ENCODE measurements at regions of chr9 and their contacts with region 1.

Region 1: DNA sequence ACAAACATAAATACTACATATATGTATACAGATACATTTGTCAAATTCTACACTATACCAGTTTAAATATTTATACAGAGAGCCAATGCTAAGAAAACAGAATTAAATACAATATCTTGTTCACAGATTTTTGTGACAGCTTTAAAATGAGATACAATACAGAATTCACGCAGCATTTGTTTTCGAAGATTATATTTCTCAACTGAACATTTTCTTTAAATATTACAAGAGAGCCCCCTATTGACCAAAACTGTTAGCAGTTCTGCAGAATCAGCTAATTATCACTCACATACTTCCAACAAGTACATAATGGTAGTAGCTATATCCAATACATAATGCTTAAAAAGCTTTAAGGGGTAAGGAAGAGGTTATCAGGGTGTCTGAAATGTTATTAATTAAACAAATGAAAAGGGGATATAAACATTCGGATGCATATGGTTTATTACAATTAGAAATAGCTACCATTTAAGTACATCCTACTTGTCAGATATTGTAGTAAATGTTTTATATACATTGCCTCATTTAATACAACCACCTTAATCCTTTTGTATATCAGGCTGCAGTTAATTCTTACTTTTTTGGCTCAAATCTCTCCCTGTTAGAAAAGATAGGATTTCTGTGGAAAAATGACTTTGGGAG is 31.7 kb downstream of the ZDHHC21 start:
- DNase-seq: peak; percentile 58
- H3K4me3 ChIP-seq: no peak overlapping the region
- H3K27ac ChIP-seq: no peak overlapping the region
- H3K4me1 ChIP-seq: no peaks in the 10 kb centered on the region; a peak in 1 of 4 replicates
- H3K27me3 ChIP-seq: no peaks in the 10 kb centered on the region
- CTCF ChIP-seq: peak; percentile 71
- EP300 ChIP-seq: no peak
- RAD21 ChIP-seq: peak; percentile 78

Region 2: DNA sequence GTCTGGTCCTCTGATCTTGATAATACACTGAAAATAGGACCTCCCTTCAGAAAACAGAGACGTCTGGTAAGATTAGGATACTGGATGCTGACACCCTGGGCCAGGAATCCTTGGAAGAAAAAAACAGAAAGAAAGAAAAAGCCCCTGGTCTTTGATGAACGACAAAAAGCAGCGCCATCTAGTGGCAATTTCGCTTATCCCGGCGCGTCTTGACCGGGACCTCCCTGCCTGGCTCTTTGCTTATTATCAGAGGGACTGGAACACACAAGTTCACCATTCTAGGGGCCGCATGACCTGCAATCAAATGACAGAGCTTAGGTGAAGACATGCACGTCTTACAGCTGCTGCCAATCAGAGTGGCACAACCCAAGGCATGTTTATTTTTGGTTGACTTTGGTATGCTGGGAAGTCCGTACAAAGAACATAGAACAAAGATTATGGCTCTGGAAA is 232.7 kb before region 1 on chr9:
- CTCF ChIA-PET with region 1: interaction called, 14 read pairs
- POLR2A ChIA-PET with region 1: no interaction called
- DNase-seq: peak; percentile 53
- H3K4me3 ChIP-seq: no peak overlapping the region; a peak in 1 of 4 replicates
- H3K27ac ChIP-seq: peak overlapping the region in 1 of 2 experiments; percentile 18; a peak in 1 of 4 replicates
- H3K4me1 ChIP-seq: peaks cover 7 to 15% of the 10 kb centered on the region in 2 experiments; a peak in 3 of 4 replicates
- H3K27me3 ChIP-seq: no peaks in the 10 kb centered on the region
- CTCF ChIP-seq: peak; percentile 91
- EP300 ChIP-seq: no peak
- RAD21 ChIP-seq: peak; percentile 76

Region 3: GRCh38 chr9:14441976-14442651 is 219.4 kb before region 1 on chr9:
- CTCF ChIA-PET with region 1: interaction called, 25 read pairs
- POLR2A ChIA-PET with region 1: no interaction called
- DNase-seq: no peak
- H3K4me3 ChIP-seq: no peak overlapping the region
- H3K27ac ChIP-seq: no peak overlapping the region
- H3K4me1 ChIP-seq: peaks cover 8 to 28% of the 10 kb centered on the region in 2 experiments; a peak in 2 of 4 replicates
- H3K27me3 ChIP-seq: no peaks in the 10 kb centered on the region
- CTCF ChIP-seq: peak; percentile 47
- EP300 ChIP-seq: no peak
- RAD21 ChIP-seq: 0 out of 2 replicates have a peak, but pooled peaks have one; percentile 9

Region 4: GRCh38 chr9:14466429-14466818 is 195.1 kb before region 1 on chr9:
- CTCF ChIA-PET with region 1: interaction called, 25 read pairs
- POLR2A ChIA-PET with region 1: no interaction called
- DNase-seq: no peak
- H3K4me3 ChIP-seq: no peak overlapping the region
- H3K27ac ChIP-seq: no peak overlapping the region
- H3K4me1 ChIP-seq: peaks cover 0 to 4% of the 10 kb centered on the region in 2 experiments; a peak in 1 of 4 replicates
- H3K27me3 ChIP-seq: no peaks in the 10 kb centered on the region
- CTCF ChIP-seq: no peak
- EP300 ChIP-seq: no peak
- RAD21 ChIP-seq: no peak

Region 5: DNA sequence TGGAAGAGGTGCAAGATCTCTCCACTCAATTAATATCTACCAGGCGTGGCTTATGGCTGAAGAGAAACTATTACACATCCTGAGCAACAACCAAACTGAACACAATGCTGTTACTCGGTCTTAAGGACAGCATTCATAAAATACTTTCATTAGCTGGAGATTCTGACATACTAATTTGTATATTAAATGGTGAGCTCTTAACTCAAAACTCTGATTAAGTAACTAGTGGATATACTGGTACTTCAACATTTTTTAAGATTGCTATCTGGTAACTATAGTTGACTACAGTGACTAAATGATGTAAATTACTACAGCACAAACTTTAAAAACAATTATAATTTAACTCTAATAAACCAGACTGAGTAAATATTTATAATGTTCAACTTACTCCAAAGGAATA is 15.9 kb after region 1 on chr9:
- CTCF ChIA-PET with region 1: interaction called, 10 read pairs
- POLR2A ChIA-PET with region 1: no interaction called
- DNase-seq: no peak
- H3K4me3 ChIP-seq: no peak overlapping the region
- H3K27ac ChIP-seq: no peak overlapping the region
- H3K4me1 ChIP-seq: no peaks in the 10 kb centered on the region; a peak in 1 of 4 replicates
- H3K27me3 ChIP-seq: no peaks in the 10 kb centered on the region
- CTCF ChIP-seq: no peak
- EP300 ChIP-seq: no peak
- RAD21 ChIP-seq: no peak

Region 6: DNA sequence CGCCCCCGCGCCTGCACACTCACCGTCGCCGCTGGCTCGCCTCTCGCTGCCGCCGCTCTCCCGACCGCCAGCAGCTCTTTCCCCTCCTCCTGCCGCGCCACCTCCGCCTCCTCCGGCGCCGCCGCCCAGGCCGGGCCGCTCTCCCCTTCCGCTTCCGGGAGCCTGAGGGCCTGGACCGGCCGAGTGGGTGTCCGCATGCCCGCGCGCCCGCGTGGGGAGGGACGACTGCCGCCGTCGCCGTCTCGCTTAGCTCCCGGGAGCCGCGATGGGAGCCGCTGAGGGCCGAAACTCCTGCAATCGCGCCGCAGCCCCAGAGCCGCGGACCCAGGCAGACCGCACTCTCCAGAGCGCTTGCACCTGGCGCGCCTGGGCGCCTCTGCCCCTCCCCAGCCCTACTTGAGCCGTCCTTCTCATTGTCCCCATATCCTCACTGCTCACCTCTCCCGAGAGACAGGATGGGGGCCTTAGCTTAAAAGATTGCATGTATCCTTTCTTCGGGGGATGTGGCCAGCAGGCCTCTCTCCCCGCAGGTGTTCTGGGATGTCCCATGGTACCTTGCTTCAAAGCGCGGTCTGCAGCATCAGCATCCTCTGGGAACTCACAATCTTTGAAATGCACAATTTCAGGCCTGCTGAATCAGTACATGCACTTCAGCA is 31.8 kb after region 1 on chr9 and contains the start of gene ZDHHC21:
- CTCF ChIA-PET with region 1: interaction called, 16 read pairs
- POLR2A ChIA-PET with region 1: no interaction called
- DNase-seq: peak; percentile 91
- H3K4me3 ChIP-seq: peak within 1 kb of the TSS; percentile 82 to 93
- H3K27ac ChIP-seq: peak within 1 kb of the TSS in 1 of 2 experiments; percentile 93; a peak in 2 of 4 replicates
- H3K4me1 ChIP-seq: peaks cover 8 to 13% of the 10 kb centered on the region in 2 experiments; a peak in 3 of 4 replicates
- H3K27me3 ChIP-seq: no peaks in the 10 kb centered on the region
- CTCF ChIP-seq: no peak
- EP300 ChIP-seq: no peak
- RAD21 ChIP-seq: no peak
- polyA plus RNA-seq, gene ZDHHC21: 2.9 and 4.3 TPM in 2 replicates

Region 7: GRCh38 chr9:14958989-14959388 is 297.4 kb after region 1 on chr9:
- CTCF ChIA-PET with region 1: no interaction called
- POLR2A ChIA-PET with region 1: no interaction called
- DNase-seq: no peak
- H3K4me3 ChIP-seq: no peak overlapping the region
- H3K27ac ChIP-seq: peak overlapping the region in 1 of 2 experiments; percentile 20; a peak in 1 of 4 replicates
- H3K4me1 ChIP-seq: peaks cover 5 to 23% of the 10 kb centered on the region in 2 experiments; a peak in 3 of 4 replicates
- H3K27me3 ChIP-seq: no peaks in the 10 kb centered on the region
- CTCF ChIP-seq: no peak
- EP300 ChIP-seq: no peak
- RAD21 ChIP-seq: no peak

Measured in SK-N-SH (cell line).